Mammary epithelial cell (primary cell): ENCODE measurements at regions of chr11 and their contacts with region 1.

Region 1: DNA sequence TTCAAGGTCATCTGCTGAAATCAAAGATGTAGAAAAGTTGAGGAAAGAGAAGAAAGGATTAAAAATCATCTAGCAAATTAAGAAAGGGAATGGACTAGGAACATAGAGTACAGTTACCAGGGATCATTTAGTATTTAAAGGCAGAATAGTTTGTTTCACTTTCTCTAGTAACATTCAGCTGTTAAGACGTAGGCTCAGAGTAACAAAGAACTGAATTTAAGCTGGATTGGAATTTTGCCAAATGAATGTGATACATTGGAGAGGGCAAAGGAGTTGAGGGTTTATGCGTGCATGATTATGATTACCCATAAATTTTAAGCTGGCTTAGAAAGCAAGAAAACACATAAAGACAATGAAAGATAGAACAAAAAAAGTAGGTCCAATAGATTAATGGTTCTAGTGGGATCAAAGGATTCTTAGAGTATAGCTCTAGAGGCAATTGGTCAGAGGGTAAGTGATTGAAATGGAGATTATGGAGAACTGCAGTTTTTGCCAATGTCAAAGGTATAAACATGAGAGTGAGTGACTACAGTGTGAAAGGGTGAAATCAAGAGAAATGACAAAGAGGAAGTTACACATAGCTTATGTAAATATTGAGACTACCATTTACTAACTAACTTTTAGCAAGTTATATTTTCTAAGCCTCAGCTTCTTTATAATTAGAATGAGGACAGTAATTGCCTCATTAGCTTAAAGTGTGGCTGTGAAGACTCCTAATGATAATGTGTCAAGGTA is 190.0 kb downstream of the GRIA4 start:
- DNase-seq: no peak
- H3K4me3 ChIP-seq: no peak overlapping the region
- H3K27ac ChIP-seq: no peak overlapping the region
- H3K4me1 ChIP-seq: no peaks in the 10 kb centered on the region
- H3K27me3 ChIP-seq: no peaks in the 10 kb centered on the region
- CTCF ChIP-seq: no peak

Region 2: DNA sequence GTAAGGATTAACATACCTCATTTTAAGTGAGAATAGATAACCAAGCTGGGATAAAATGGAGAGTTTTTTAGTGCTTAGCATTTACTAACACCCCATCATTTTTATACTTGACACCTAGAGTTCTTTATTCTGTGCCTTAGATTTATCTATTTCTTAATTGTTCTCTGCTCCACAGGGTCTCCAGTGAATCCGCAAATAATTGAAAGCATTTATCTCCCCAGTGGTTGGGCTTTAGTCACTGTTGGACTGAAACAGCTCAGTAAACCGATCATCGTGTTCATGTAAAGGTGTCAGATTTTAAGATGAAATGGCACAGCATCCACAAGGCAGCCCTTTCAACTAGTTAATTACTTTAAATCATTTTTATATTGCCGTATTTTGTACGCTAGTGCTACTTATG is 207.9 kb before region 1 on chr11:
- CTCF ChIA-PET with region 1: no interaction called
- dilution Hi-C with region 1: no loop called
- in situ Hi-C with region 1: no loop called
- intact Hi-C with region 1: no loop called
- DNase-seq: no peak
- H3K4me3 ChIP-seq: no peak overlapping the region
- H3K27ac ChIP-seq: no peak overlapping the region
- H3K4me1 ChIP-seq: no peaks in the 10 kb centered on the region
- H3K27me3 ChIP-seq: no peaks in the 10 kb centered on the region
- CTCF ChIP-seq: no peak

Region 3: DNA sequence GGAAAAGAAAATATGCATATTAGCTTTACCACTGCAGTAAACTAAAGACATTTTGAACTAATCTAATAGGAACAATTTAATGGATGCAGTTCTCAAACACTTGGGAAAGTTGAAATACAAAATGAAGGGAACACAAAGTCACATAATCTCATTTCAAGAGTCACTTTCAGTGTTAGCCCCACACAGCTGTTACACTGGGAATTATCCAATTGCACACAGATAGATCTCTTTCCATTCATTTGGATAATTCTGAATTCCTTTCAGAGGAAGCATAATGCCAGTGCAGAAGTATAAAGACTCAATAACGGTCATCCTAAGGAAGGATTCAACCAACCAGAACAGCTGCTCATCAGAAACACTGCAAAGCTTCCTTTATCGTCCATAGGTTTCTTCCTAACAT is 16.7 kb before region 1 on chr11:
- CTCF ChIA-PET with region 1: no interaction called
- dilution Hi-C with region 1: no loop called
- in situ Hi-C with region 1: no loop called
- intact Hi-C with region 1: loop called (anchors 1 kb)
- DNase-seq: no peak
- H3K4me3 ChIP-seq: no peak overlapping the region
- H3K27ac ChIP-seq: no peak overlapping the region
- H3K4me1 ChIP-seq: no peaks in the 10 kb centered on the region
- H3K27me3 ChIP-seq: no peaks in the 10 kb centered on the region
- CTCF ChIP-seq: no peak